GM10248 (cell line): ENCODE measurements at regions of chr4 and their contacts with region 1.

Region 1: DNA sequence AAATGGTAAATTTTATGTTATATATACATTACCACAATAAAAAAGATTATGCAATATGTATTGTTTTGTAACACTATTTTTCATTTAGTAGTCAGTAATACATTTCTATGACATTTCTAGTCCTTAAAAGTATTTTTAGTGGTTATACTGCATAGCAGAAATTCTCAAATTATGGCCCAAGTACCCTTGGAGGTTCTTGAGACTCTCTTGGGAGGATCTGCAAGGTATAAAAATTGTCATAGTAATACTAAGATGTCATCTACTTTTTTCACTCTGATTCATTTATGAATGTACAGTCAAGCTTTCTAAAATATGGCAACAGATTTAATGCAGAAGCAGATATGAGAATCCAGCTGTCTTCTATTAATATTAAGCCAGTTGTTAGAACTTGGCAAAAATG is 138.6 kb upstream of the NAP1L5 start:
- DNase-seq: no peak
- CTCF ChIP-seq: no peak

Region 2: GRCh38 chr4:88818631-88819470 is 17.4 kb before region 1 on chr4:
- CTCF ChIA-PET with region 1: interaction called, 11 read pairs
- POLR2A ChIA-PET with region 1: no interaction called
- DNase-seq: peak; percentile 14
- CTCF ChIP-seq: peak; percentile 48

Region 3: DNA sequence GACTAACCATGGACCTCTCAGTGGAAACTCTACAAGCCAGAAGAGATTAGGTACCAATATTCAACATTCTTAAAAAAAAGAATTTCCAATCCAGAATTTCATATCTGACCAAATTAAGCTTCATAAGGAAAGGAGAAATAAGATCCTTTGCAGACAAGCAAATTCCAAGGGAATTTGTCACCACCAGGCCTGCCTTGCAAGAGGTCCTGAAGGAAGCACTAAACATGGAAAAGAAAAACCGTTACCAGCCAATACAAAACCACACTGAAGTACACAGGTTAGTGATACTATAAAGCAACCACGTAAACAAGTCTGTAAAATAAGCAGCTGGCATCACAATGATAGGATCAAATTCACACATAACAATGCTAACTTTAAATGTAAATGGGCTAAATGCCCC is 64.2 kb after region 1 on chr4:
- CTCF ChIA-PET with region 1: no interaction called
- POLR2A ChIA-PET with region 1: no interaction called
- DNase-seq: no peak
- CTCF ChIP-seq: no peak